ENCODE measurements at regions of chr14 and their contacts with region 1.

Region 1: GRCh38 chr14:75002392-75003249 is at the start of gene EIF2B2:
- DNase-seq: peak; percentile 97
- H3K4me3 Mint-ChIP-seq: peak within 1 kb of the TSS; percentile 94
- H3K27ac Mint-ChIP-seq: peak within 1 kb of the TSS; percentile 72
- H3K4me1 Mint-ChIP-seq: peaks cover 16% of the 10 kb centered on the region
- H3K27me3 Mint-ChIP-seq: no peaks in the 10 kb centered on the region
- CTCF ChIP-seq: no peak
- total RNA-seq, gene EIF2B2: 53.8 and 57.9 TPM in 2 replicates

Region 2: DNA sequence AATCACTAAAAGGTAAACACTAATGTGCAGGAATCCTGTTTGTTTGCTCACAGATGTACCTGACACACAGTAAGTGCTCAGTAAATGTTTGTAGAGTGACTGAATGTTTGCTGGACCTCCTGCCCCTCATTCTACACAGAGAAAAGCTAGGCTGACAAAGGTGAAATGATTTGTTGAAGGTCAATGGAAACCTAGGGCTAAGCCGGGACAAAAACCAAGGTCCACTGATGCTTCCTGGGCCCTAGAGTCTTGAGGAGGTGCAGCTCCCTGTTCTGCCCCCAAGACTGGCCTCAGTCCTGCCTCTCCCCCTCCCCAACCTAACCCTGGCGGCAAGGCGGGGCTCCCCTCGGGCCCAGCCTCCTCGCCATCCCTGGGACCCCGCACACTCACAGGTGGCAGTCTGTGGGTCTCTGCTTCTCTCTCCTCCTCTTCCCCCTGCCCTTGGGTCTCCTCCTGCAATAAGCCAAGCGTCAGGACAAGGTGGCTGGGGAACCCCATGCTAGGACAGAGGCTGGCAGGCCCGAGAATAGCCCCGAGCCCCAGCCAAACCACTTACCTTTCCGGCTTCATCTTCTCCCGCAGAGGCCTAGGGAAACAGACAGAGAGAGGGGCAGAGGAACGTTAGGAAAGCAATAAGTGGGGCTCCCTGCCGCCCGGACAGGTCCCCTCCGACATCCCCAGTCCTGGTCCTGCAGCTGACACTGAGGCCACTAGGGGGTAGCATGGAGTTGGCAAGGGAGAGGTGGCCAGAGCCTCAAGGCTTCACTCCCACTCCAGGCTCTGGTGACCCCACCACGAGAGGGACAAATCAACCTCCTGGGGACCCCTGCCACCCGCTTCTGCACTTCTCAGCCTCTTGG is 56.6 kb before region 1 on chr14:
- CTCF ChIA-PET with region 1: interaction called, 5 read pairs
- POLR2A ChIA-PET with region 1: interaction called, 3 read pairs
- intact Hi-C with region 1: loop called (anchors 5 kb)
- DNase-seq: peak; percentile 78
- H3K4me3 Mint-ChIP-seq: peak overlapping the region; percentile 34
- H3K27ac Mint-ChIP-seq: peak overlapping the region; percentile 52
- H3K4me1 Mint-ChIP-seq: peaks cover 14% of the 10 kb centered on the region
- H3K27me3 Mint-ChIP-seq: no peaks in the 10 kb centered on the region
- CTCF ChIP-seq: peak; percentile 81

Region 3: GRCh38 chr14:75063407-75064213 is 61.0 kb after region 1 on chr14 and contains the start of gene ACYP1:
- CTCF ChIA-PET with region 1: interaction called, 3 read pairs
- POLR2A ChIA-PET with region 1: interaction called, 18 read pairs
- intact Hi-C with region 1: no loop called
- DNase-seq: peak; percentile 90
- H3K4me3 Mint-ChIP-seq: peak within 1 kb of the TSS; percentile 100
- H3K27ac Mint-ChIP-seq: peak within 1 kb of the TSS; percentile 97
- H3K4me1 Mint-ChIP-seq: peaks cover 4% of the 10 kb centered on the region
- H3K27me3 Mint-ChIP-seq: no peaks in the 10 kb centered on the region
- CTCF ChIP-seq: no peak
- total RNA-seq, gene ACYP1: 11.7 and 19.9 TPM in 2 replicates

Region 4: DNA sequence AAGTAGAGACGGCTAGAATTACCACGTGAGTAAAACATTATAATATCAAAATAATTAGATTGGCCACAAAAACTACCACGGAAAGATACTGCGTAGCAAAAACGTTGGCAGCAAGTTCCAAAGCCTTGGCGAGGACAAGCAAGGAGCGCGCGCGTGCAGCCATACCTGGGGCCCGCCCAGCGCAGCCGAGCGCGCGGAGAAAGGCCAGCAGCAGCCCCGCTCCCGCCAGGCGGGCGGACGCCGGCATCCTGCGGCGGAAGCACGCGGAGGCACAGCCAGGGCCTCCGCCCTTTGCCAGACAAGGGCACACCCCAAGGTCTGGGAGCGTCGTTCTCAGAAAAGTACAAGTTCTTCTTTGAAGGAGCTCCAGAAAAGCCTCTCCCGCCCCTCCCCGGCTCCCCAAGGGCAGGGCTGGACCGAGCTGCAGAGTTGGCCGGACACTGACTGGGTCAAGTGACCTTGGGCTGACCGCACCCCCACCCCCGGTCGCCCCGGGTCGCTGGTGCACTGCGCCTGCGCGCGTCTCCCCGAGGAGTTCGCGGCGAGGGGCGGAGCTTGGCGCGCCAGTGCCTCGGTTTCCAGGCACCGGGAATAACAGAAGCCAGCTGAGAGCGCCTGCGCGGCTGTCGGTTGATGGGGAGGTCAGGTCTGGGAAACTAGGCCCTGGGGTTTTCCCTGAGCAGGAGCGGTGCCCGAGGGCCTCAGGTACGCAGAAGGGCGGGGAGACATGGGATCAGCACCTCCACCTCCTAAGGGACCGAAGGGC is 66.6 kb after region 1 on chr14 and contains the start of gene ZC2HC1C:
- CTCF ChIA-PET with region 1: interaction called, 3 read pairs
- POLR2A ChIA-PET with region 1: interaction called, 18 read pairs
- intact Hi-C with region 1: no loop called
- DNase-seq: peak; percentile 90
- H3K4me3 Mint-ChIP-seq: no peak within 1 kb of the TSS
- H3K27ac Mint-ChIP-seq: no peak within 1 kb of the TSS
- H3K4me1 Mint-ChIP-seq: peaks cover 6% of the 10 kb centered on the region
- H3K27me3 Mint-ChIP-seq: no peaks in the 10 kb centered on the region
- CTCF ChIP-seq: no peak
- total RNA-seq, gene ZC2HC1C: 1.3 and 2.2 TPM in 2 replicates

Region 5: DNA sequence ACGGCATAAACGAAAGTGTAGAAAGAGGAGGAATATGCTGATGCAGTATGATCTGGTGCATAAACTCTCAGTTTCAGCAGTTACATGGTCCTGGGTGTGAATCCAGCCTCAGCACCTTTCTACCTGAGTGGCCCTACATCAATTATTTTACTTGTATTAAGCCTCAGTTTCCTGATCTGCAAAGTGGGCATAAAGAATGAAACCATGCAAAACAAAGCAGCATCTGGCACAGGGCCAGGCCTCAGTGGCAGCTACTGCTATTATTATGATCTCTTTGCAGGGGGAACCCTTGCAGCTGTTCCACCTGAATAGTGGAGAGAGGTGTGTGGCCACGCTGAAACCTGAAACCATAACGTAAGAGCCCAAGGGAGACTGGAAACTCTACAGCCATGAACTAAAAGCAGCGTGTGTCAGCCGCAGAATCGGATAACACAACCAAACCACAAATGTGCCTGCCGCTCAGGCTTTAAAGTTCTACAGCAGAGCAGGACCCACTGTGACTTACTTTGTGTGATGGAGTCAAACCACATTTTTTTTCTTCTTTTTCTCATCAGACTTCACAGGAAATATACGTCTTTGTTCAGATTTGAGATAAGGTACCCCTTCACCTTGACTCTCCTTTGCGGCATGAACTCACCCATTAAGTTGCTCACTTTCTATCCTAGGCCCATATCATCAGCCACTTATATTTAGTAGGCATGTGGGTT is 246.8 kb after region 1 on chr14:
- CTCF ChIA-PET with region 1: no interaction called
- POLR2A ChIA-PET with region 1: no interaction called
- intact Hi-C with region 1: no loop called
- DNase-seq: peak; percentile 64
- H3K4me3 Mint-ChIP-seq: no peak overlapping the region
- H3K27ac Mint-ChIP-seq: no peak overlapping the region
- H3K4me1 Mint-ChIP-seq: peaks cover 25% of the 10 kb centered on the region
- H3K27me3 Mint-ChIP-seq: no peaks in the 10 kb centered on the region
- CTCF ChIP-seq: no peak

Measured in MCF 10A (cell line).